ENCODE measurements at regions of chr14 and their contacts with region 1.

Region 1: DNA sequence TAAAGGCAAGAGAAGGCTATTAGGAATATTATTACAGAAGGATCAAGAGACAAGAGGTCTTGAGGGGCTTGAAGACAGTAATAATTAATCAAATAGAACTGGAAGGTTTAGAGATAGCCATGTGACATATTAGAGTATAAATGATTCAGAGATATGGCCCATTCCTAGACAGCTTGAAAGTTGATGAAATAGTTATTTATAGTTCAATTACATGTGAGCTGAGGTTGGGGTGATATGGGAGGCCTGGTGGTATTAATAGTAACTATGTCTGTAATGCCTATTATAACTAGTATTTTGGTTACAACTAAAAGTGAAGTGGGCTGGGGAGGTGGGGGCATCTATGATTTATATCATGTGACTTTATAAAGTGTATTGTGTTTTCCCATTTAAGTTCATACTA is 14.1 kb upstream of the MIS18BP1 start:
- DNase-seq: no peak
- ATAC-seq: no peak
- H3K4me3 ChIP-seq: no peak overlapping the region
- H3K27ac ChIP-seq: no peak overlapping the region
- H3K4me1 ChIP-seq: no peaks in the 10 kb centered on the region
- H3K27me3 ChIP-seq: no peaks in the 10 kb centered on the region
- CTCF ChIP-seq: no peak

Region 2: GRCh38 chr14:44912041-44912869 is 354.8 kb before region 1 on chr14:
- CTCF ChIA-PET with region 1: no interaction called
- POLR2A ChIA-PET with region 1: no interaction called
- in situ Hi-C with region 1: no loop called
- intact Hi-C with region 1: loop called (anchors 5 kb)
- DNase-seq: no peak
- ATAC-seq: no peak
- H3K4me3 ChIP-seq: no peak overlapping the region
- H3K27ac ChIP-seq: no peak overlapping the region
- H3K4me1 ChIP-seq: no peaks in the 10 kb centered on the region
- H3K27me3 ChIP-seq: no peaks in the 10 kb centered on the region
- CTCF ChIP-seq: no peak

Region 3: DNA sequence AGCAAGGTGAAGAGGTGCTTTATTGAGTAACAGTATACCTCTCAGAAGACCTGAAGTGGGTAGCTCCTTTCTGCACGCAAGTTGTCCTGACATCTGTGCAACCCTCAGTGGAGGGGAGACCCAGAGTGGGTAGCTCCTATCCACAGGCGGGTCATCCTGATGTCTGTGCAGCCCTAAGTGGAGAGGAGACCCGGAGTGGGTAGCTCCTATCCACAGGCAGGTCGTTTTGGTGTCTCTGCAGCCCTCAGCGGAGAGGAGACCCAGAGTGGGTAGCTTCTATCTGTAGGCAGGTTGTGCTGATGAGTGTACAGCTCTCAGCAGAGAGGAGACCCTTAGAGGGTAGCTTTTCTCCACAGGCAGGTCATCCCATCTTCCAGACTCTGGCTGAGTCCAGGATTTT is 228.2 kb before region 1 on chr14:
- CTCF ChIA-PET with region 1: no interaction called
- POLR2A ChIA-PET with region 1: no interaction called
- in situ Hi-C with region 1: no loop called
- intact Hi-C with region 1: no loop called
- DNase-seq: no peak
- ATAC-seq: no peak
- H3K4me3 ChIP-seq: no peak overlapping the region
- H3K27ac ChIP-seq: no peak overlapping the region
- H3K4me1 ChIP-seq: no peaks in the 10 kb centered on the region
- H3K27me3 ChIP-seq: no peaks in the 10 kb centered on the region
- CTCF ChIP-seq: no peak

Region 4: DNA sequence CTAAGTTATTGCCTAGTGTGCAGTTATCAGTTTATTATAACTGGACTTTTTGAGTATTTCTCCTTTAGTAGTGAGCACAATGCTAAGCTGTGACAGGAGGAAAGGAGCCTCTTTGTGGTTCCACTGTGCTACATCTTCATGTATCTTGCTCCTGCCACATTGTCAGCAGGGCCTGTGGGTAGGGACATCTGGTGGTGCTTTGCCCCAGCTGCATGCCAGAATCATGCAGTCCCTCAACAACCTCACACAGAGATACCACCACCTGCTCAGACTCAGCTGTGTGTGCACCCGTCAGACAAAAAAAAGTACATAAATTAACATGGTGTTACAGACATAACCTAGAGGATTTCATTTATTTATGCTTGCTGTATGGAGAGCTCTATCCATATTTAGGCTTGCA is 65.2 kb before region 1 on chr14:
- CTCF ChIA-PET with region 1: interaction called, 10 read pairs
- POLR2A ChIA-PET with region 1: no interaction called
- in situ Hi-C with region 1: no loop called
- intact Hi-C with region 1: no loop called
- DNase-seq: no peak
- ATAC-seq: no peak; the same call in 1 of the 2 replicates
- H3K4me3 ChIP-seq: no peak overlapping the region
- H3K27ac ChIP-seq: no peak overlapping the region
- H3K4me1 ChIP-seq: no peaks in the 10 kb centered on the region
- H3K27me3 ChIP-seq: no peaks in the 10 kb centered on the region
- CTCF ChIP-seq: peak; percentile 31

Region 5: DNA sequence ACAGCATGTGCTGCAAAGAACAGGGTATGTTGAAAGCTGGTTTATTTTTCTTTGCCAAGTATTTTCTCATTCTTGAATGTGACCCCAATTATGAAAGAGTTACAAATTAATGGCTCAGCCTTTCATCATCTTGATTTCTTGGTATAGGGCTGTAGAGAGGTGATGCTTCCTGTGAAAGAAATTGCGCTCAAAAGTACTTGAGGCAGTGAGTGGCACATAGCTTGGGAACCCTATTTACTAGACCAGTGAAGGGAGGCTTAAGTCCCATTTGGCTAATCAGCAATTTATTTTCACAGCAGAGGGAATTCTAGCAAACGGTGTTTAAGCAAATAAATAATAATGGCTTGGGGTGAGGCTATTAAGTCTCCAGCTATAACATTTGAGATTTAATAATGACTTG is 139.9 kb after region 1 on chr14:
- CTCF ChIA-PET with region 1: interaction called, 11 read pairs
- POLR2A ChIA-PET with region 1: no interaction called
- in situ Hi-C with region 1: no loop called
- intact Hi-C with region 1: no loop called
- DNase-seq: no peak
- ATAC-seq: no peak
- H3K4me3 ChIP-seq: no peak overlapping the region
- H3K27ac ChIP-seq: no peak overlapping the region
- H3K4me1 ChIP-seq: no peaks in the 10 kb centered on the region
- H3K27me3 ChIP-seq: no peaks in the 10 kb centered on the region
- CTCF ChIP-seq: no peak

Region 6: GRCh38 chr14:45434221-45434620 is 167.2 kb after region 1 on chr14:
- CTCF ChIA-PET with region 1: no interaction called
- POLR2A ChIA-PET with region 1: no interaction called
- in situ Hi-C with region 1: no loop called
- intact Hi-C with region 1: no loop called
- DNase-seq: no peak
- ATAC-seq: no peak
- H3K4me3 ChIP-seq: no peak overlapping the region
- H3K27ac ChIP-seq: no peak overlapping the region
- H3K4me1 ChIP-seq: no peaks in the 10 kb centered on the region
- H3K27me3 ChIP-seq: no peaks in the 10 kb centered on the region
- CTCF ChIP-seq: no peak